Caco-2 (cell line): ENCODE measurements at regions of chr17 and their contacts with region 1.

Region 1: GRCh38 chr17:29867643-29868181 is 62.3 kb downstream of the SSH2 start:
- DNase-seq: no peak
- H3K4me3 ChIP-seq: no peak overlapping the region
- H3K4me3 Mint-ChIP-seq: no peak overlapping the region
- H3K27ac Mint-ChIP-seq: no peak overlapping the region
- H3K4me1 ChIP-seq: no peaks in the 10 kb centered on the region
- H3K4me1 Mint-ChIP-seq: no peaks in the 10 kb centered on the region
- H3K27me3 ChIP-seq: no peaks in the 10 kb centered on the region
- H3K27me3 Mint-ChIP-seq: no peaks in the 10 kb centered on the region
- CTCF ChIP-seq: peak; percentile 21 to 44

Region 2: GRCh38 chr17:29903471-29903870 is 35.8 kb after region 1 on chr17:
- CTCF ChIA-PET with region 1: no interaction called
- POLR2A ChIA-PET with region 1: no interaction called
- intact Hi-C with region 1: no loop called
- DNase-seq: no peak
- H3K4me3 ChIP-seq: no peak overlapping the region
- H3K4me3 Mint-ChIP-seq: no peak overlapping the region
- H3K27ac Mint-ChIP-seq: no peak overlapping the region
- H3K4me1 ChIP-seq: no peaks in the 10 kb centered on the region
- H3K4me1 Mint-ChIP-seq: no peaks in the 10 kb centered on the region
- H3K27me3 ChIP-seq: no peaks in the 10 kb centered on the region
- H3K27me3 Mint-ChIP-seq: no peaks in the 10 kb centered on the region
- CTCF ChIP-seq: no peak

Region 3: GRCh38 chr17:30021708-30022317 is 154.1 kb after region 1 on chr17:
- CTCF ChIA-PET with region 1: no interaction called
- POLR2A ChIA-PET with region 1: no interaction called
- intact Hi-C with region 1: loop called (anchors 2 kb)
- DNase-seq: peak in 1 of 2 experiments; percentile 50
- H3K4me3 ChIP-seq: no peak overlapping the region
- H3K4me3 Mint-ChIP-seq: no peak overlapping the region
- H3K27ac Mint-ChIP-seq: no peak overlapping the region
- H3K4me1 ChIP-seq: no peaks in the 10 kb centered on the region
- H3K4me1 Mint-ChIP-seq: no peaks in the 10 kb centered on the region
- H3K27me3 ChIP-seq: no peaks in the 10 kb centered on the region
- H3K27me3 Mint-ChIP-seq: peaks cover 7% of the 10 kb centered on the region
- CTCF ChIP-seq: peak; percentile 60 to 85